Breast epithelium (tissue), 4 donors: ENCODE measurements at regions of chr19 and their contacts with region 1.

Region 1: GRCh38 chr19:44003461-44004009 is 778 bp downstream of the ZNF230 start:
- DNase-seq: no peak
- H3K4me3 ChIP-seq: peak overlapping the region; percentile 74 to 84 (median 78)
- H3K27ac ChIP-seq: peak overlapping the region; percentile 88 to 89
- H3K4me1 ChIP-seq: peaks cover 0 to 6% of the 10 kb centered on the region in 2 donors
- H3K27me3 ChIP-seq: no peaks in the 10 kb centered on the region
- CTCF ChIP-seq: no peak
- POLR2A ChIP-seq: no peak

Region 2: GRCh38 chr19:42108527-42109389 is 1894.8 kb before region 1 on chr19:
- intact Hi-C with region 1: no loop called
- DNase-seq: peak in 1 of 2 donors; percentile 63
- H3K4me3 ChIP-seq: no peak overlapping the region
- H3K27ac ChIP-seq: no peak overlapping the region
- H3K4me1 ChIP-seq: no peaks in the 10 kb centered on the region
- H3K27me3 ChIP-seq: no peaks in the 10 kb centered on the region
- CTCF ChIP-seq: peak; percentile 69 to 81 (median 78)
- POLR2A ChIP-seq: no peak

Region 3: DNA sequence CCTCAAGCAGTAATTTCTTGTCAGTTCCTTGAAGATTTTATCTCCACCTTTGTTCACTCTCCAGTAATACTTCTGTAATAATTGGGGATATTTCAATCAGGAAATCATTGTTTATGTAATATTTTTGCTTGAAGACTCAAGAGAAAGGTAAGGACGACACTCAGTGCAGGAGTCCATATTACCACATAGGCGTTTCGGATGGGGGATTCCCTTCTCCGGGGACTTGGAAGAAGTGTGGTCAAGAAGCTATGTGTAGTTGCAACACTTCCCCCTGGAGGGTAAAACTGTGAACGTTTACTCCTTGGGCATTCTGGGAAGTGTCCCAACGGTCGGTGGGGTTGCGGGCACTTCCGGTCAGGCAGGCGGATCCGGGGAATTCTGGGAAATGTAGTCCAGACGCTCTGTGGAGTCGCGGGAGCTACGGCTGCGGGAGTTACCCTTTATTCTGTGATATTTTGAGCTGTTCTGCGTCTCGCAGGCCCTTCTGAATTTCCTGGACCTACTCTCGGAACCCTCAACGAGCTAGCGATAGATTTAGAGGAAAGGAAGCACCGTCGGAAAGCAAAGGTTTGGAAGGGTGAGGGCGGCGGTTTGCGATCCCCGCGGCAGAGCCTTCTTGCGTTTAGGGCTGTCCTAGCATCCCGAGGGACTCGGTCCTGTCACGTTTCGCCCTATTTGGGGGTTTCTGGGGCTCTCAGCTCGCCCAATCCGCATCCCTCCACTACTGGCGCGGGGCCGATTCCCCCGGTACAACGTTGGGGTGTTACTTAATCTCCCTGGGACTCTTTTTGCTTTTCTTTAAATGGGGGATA is 52.5 kb before region 1 on chr19 and contains the start of gene ZNF221:
- intact Hi-C with region 1: loop called (anchors 2 kb)
- DNase-seq: peak; percentile 84 to 87
- H3K4me3 ChIP-seq: peak within 1 kb of the TSS; percentile 66 to 83 (median 71)
- H3K27ac ChIP-seq: peak within 1 kb of the TSS; percentile 49 to 68
- H3K4me1 ChIP-seq: no peaks in the 10 kb centered on the region
- H3K27me3 ChIP-seq: peaks cover 0 to 4% of the 10 kb centered on the region in 2 donors
- CTCF ChIP-seq: peak; percentile 22 to 47 (median 45)
- POLR2A ChIP-seq: no peak
- total RNA-seq, gene ZNF221: 4.5 to 11.7 (median 7.2) TPM